ENCODE measurements at regions of chr1 and their contacts with region 1.

Region 1: GRCh38 chr1:202348509-202349205 is at the start of gene PPP1R12B:
- DNase-seq: peak; percentile 97 to 100 (median 98)

Region 2: GRCh38 chr1:202405928-202406327 is 57.3 kb after region 1 on chr1:
- intact Hi-C with region 1: loop called (anchors 5 kb)
- DNase-seq: no peak

Region 3: GRCh38 chr1:202416641-202417040 is 68.0 kb after region 1 on chr1:
- intact Hi-C with region 1: loop called (anchors 5 kb)
- DNase-seq: peak in 1 of 10 donors; percentile 30

Region 4: GRCh38 chr1:202501281-202501680 is 152.6 kb after region 1 on chr1:
- intact Hi-C with region 1: no loop called
- DNase-seq: no peak

Measured in posterior cingulate gyrus (tissue), 11 donors.